ENCODE measurements at regions of chr6 and their contacts with region 1.

Region 1: DNA sequence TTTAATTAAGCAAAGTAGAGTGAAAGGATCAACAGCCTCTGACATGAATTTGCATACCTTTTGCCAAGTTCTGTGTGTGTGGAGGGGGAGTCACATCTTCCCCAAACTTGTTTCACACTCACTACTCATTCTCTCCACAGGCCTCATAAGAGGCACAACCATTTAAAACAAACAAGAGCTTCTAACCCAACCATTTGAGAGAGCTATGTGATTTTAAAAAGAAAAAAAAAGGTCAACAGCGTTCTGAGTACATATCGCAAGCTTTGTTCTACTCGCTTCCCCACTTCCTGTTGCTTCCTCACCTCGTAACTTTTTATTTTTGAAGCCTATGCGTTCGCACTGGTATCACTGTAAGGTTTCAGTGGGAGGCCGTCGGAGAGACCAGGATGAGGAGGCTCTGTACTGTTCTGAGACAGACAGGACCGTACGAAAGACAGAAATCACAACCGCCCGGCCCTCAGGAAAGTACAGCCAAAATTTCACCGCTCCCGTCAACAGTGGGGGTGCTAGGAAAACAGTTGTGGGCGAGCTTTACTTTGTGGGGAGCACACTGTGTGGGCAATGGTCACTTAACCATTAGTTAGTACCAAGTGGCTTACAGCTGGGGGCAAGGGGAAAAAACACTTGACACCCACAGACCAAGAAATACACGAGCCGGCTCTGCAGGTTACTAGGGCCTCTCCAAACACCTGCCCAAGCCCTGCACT is 61.3 kb downstream of the TRERF1 start:
- DNase-seq: peak; percentile 87
- H3K4me3 Mint-ChIP-seq: peak overlapping the region; percentile 84
- H3K27ac Mint-ChIP-seq: peak overlapping the region; percentile 100
- H3K4me1 Mint-ChIP-seq: peaks cover 79% of the 10 kb centered on the region
- H3K27me3 Mint-ChIP-seq: no peaks in the 10 kb centered on the region

Region 2: DNA sequence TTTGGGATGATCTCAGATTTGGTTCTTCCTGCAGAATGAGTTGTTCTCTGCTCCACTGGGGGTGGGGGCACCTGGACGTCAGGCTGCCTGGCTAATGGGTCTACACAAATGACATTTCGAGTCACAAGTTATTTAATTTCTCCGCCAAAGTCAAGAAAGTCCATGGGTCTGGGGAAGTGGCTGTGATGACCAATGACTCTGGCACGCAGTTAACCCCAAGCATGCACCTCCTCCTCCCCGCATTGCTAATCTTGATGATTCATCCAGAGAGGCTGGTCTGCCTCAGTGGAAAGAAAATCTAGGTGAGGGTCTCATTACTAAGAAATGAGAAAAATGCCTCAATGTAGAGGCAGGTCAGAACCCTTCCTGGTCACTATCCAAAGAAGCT is 74.4 kb before region 1 on chr6:
- intact Hi-C with region 1: loop called (anchors 2 kb)
- DNase-seq: no peak
- H3K4me3 Mint-ChIP-seq: peak overlapping the region; percentile 7
- H3K27ac Mint-ChIP-seq: peak overlapping the region; percentile 85
- H3K4me1 Mint-ChIP-seq: peaks cover 47% of the 10 kb centered on the region
- H3K27me3 Mint-ChIP-seq: no peaks in the 10 kb centered on the region

Region 3: GRCh38 chr6:42352856-42353564 is 37.4 kb before region 1 on chr6:
- intact Hi-C with region 1: loop called (anchors 1 kb)
- DNase-seq: no peak
- H3K4me3 Mint-ChIP-seq: no peak overlapping the region
- H3K27ac Mint-ChIP-seq: no peak overlapping the region
- H3K4me1 Mint-ChIP-seq: peaks cover 15% of the 10 kb centered on the region
- H3K27me3 Mint-ChIP-seq: no peaks in the 10 kb centered on the region

Region 4: DNA sequence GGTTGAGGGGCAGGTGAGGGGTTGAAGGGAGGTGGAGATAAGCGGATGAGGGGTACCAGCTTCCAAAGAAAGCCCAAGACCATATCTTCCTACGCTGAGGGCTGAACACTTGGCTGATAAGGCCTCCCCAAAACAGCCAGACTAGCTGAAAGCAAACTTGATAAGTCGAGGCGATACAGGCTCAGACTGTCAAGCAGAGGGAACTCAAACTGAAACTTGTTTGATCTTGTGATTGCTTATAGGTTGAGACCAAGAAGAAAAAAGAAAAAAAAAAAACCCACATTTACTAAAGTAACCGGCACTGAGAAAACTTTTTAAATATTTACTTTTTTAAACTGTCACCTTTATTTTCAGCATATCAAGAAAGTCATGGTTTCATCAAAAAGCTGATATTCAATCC is 12.3 kb before region 1 on chr6:
- intact Hi-C with region 1: loop called (anchors 1 kb)
- DNase-seq: peak; percentile 84
- H3K4me3 Mint-ChIP-seq: peak overlapping the region; percentile 64
- H3K27ac Mint-ChIP-seq: peak overlapping the region; percentile 82
- H3K4me1 Mint-ChIP-seq: peaks cover 48% of the 10 kb centered on the region
- H3K27me3 Mint-ChIP-seq: no peaks in the 10 kb centered on the region

Region 5: GRCh38 chr6:42423244-42423643 is 32.9 kb after region 1 on chr6:
- intact Hi-C with region 1: loop called (anchors 1 kb)
- DNase-seq: peak; percentile 72
- H3K4me3 Mint-ChIP-seq: peak overlapping the region; percentile 52
- H3K27ac Mint-ChIP-seq: peak overlapping the region; percentile 10
- H3K4me1 Mint-ChIP-seq: peaks cover 50% of the 10 kb centered on the region
- H3K27me3 Mint-ChIP-seq: no peaks in the 10 kb centered on the region

Region 6: GRCh38 chr6:42569102-42570028 is 179.0 kb after region 1 on chr6:
- intact Hi-C with region 1: loop called (anchors 1 kb)
- DNase-seq: no peak
- H3K4me3 Mint-ChIP-seq: peak overlapping the region; percentile 32
- H3K27ac Mint-ChIP-seq: peak overlapping the region; percentile 90
- H3K4me1 Mint-ChIP-seq: peaks cover 43% of the 10 kb centered on the region
- H3K27me3 Mint-ChIP-seq: no peaks in the 10 kb centered on the region

Measured in activated CD4-positive, alpha-beta T cell treated with anti-CD3 and anti-CD28 coated beads, Interleukin-2, amount 10 ng/mL, durations not matched to agents 24 days and 14 days (primary cell).